ENCODE measurements at regions of chr16 and their contacts with region 1.

Region 1: DNA sequence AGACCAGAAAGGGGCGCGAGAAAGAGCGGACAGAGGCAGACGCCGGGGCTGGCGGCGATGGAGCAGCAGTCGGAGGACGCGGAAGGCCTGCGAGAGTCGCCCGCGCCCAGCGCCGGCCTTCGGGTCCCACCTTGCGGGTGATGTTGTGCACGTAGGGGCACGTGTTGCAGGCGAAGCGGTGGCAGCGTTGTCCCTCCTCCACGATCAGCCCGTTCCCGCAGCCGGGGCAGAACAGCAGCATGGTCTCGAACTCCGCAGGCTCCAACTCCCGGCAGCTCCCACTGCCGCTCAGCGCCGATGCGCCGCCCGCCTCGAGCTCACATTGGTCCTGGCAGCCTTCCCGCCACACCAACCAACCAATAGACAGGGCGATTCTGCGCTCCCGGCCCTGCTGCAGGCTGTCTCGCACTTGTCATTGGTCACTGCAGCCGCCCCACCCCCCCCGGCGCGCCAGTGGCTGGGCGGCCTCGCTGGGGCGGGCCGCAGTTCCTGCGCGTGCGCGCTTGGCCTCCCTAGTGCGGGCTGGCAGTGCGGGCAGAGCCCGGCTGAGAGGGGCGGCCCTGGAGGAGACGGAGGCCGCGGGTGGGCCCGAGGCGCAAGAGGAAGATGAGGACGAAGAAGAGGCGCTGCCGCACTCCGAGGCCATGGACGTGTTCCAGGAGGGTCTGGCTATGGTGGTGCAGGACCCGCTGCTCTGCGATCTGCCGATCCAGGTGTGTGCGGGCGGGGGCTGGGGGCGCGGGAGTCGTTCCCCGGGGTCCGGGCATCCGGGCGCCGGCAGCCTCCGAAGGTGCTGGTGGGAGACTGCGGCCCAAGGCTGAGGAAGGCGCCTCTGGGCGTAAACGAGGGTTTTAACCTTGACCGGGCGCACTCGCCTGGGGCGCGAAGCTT is at the starts of genes POLR3K and SNRNP25:
- DNase-seq: peak; percentile 96 to 99 (median 98)
- ATAC-seq: peak; percentile 97
- H3K4me3 ChIP-seq: peak within 1 kb of the TSS; percentile 91 to 98
- H3K4me3 Mint-ChIP-seq: peak within 1 kb of the TSS; percentile 97
- H3K27ac ChIP-seq: peak within 1 kb of the TSS; percentile 60
- H3K27ac Mint-ChIP-seq: peak within 1 kb of the TSS; percentile 85
- H3K4me1 ChIP-seq: peaks cover 21% of the 10 kb centered on the region
- H3K4me1 Mint-ChIP-seq: peaks cover 28% of the 10 kb centered on the region
- H3K27me3 ChIP-seq: no peaks in the 10 kb centered on the region
- H3K27me3 Mint-ChIP-seq: no peaks in the 10 kb centered on the region
- CTCF ChIP-seq: no peak
- total RNA-seq, gene POLR3K: 4.6 to 5.5 TPM
- total RNA-seq, gene SNRNP25: 4.9 to 5.4 TPM

Region 2: GRCh38 chr16:77807-78443 is 24.3 kb after region 1 on chr16 and contains the start of gene MPG:
- CTCF ChIA-PET with region 1: no interaction called
- POLR2A ChIA-PET with region 1: interaction called, 4 read pairs
- intact Hi-C with region 1: loop called (anchors 1 kb)
- DNase-seq: peak; percentile 55 to 90 (median 80)
- ATAC-seq: peak; percentile 91
- H3K4me3 ChIP-seq: peak within 1 kb of the TSS; percentile 68 to 69
- H3K4me3 Mint-ChIP-seq: peak within 1 kb of the TSS; percentile 87
- H3K27ac ChIP-seq: peak within 1 kb of the TSS; percentile 31 to 55
- H3K27ac Mint-ChIP-seq: peak within 1 kb of the TSS; percentile 73
- H3K4me1 ChIP-seq: peaks cover 26% of the 10 kb centered on the region
- H3K4me1 Mint-ChIP-seq: peaks cover 31% of the 10 kb centered on the region
- H3K27me3 ChIP-seq: peaks cover 5 to 7% of the 10 kb centered on the region in 2 experiments
- H3K27me3 Mint-ChIP-seq: peaks cover 11% of the 10 kb centered on the region
- CTCF ChIP-seq: no peak
- total RNA-seq, gene MPG: 12.3 to 13.0 TPM

Region 3: DNA sequence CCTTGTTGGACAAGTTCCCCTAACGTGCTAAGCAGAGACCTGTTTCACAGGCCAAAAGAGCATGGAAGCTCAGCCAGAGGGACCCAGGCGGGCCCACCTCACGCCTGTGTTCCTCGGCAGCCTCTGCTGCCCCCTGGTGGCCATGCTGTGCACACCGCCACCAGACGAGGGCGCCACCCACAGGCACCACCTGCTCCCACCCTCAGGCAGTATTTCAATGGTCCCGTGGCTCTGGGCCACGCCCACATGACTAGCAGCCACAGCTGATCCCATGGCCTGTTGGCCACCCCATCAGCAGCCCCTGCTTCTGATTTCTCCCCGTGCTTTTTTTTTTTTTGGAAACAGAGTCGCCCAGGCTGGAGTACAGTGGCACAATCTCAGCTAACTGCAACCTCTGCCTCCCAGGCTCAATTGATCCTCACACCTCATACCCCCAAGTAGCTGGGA is 43.4 kb after region 1 on chr16:
- CTCF ChIA-PET with region 1: interaction called, 10 read pairs
- POLR2A ChIA-PET with region 1: no interaction called
- intact Hi-C with region 1: no loop called
- DNase-seq: peak; percentile 82 to 94 (median 90)
- ATAC-seq: peak; percentile 100
- H3K4me3 ChIP-seq: no peak overlapping the region
- H3K4me3 Mint-ChIP-seq: no peak overlapping the region
- H3K27ac ChIP-seq: no peak overlapping the region
- H3K27ac Mint-ChIP-seq: no peak overlapping the region
- H3K4me1 ChIP-seq: no peaks in the 10 kb centered on the region
- H3K4me1 Mint-ChIP-seq: peaks cover 5% of the 10 kb centered on the region
- H3K27me3 ChIP-seq: no peaks in the 10 kb centered on the region
- H3K27me3 Mint-ChIP-seq: no peaks in the 10 kb centered on the region
- CTCF ChIP-seq: peak; percentile 97

Region 4: DNA sequence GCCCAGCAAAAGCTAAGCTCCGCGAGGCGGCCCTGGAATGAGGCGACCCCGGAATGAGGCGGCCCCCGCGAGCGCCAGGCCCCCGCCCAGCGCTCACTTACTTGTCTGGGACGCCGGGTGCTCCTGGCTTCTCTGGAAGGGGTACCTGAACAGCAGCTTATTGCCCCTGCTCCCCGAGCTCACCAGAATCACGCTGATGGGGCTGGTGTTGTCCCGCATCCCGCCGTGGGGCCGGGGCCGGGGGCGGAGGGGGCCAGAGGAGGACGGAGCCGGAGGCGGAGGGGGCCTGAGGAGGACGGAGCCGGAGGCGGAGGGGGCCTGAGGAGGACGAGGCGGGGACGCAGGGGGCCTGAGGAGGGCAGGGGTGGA is 84.4 kb after region 1 on chr16:
- CTCF ChIA-PET with region 1: no interaction called
- POLR2A ChIA-PET with region 1: no interaction called
- intact Hi-C with region 1: loop called in 1 of 2 experiments (anchors 1 kb)
- DNase-seq: peak in 6 of 9 experiments; percentile 8 to 61 (median 36)
- ATAC-seq: peak; percentile 25
- H3K4me3 ChIP-seq: peak overlapping the region; percentile 58 to 75
- H3K4me3 Mint-ChIP-seq: peak overlapping the region; percentile 85
- H3K27ac ChIP-seq: peak overlapping the region; percentile 33 to 40
- H3K27ac Mint-ChIP-seq: peak overlapping the region; percentile 66
- H3K4me1 ChIP-seq: peaks cover 7% of the 10 kb centered on the region
- H3K4me1 Mint-ChIP-seq: peaks cover 34% of the 10 kb centered on the region
- H3K27me3 ChIP-seq: no peaks in the 10 kb centered on the region
- H3K27me3 Mint-ChIP-seq: no peaks in the 10 kb centered on the region
- CTCF ChIP-seq: no peak

Region 5: DNA sequence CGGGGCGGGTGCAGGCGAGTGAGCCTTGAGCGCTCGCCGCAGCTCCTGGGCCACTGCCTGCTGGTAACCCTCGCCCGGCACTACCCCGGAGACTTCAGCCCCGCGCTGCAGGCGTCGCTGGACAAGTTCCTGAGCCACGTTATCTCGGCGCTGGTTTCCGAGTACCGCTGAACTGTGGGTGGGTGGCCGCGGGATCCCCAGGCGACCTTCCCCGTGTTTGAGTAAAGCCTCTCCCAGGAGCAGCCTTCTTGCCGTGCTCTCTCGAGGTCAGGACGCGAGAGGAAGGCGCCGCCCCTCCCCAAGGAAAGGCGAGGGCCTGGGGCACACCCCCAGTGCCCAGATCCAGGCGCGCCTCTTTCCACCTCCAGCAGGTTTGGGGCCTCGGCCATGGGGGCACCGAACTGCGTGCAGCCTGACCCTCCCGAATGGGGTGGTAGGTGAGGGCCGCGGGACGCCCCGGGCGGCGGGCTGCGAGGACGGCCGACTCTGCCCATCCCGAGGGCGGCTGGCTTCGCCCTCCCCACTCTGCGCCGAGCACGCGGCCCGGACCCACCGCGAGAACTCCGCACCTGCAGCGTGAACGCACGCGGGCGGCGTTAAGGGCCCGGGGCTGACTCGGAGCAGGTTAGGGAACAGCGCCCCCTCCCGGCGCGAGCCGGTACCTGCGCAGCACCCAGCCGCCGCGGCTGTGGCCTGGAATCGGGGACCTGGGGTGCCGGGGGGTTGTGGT is 127.5 kb after region 1 on chr16:
- CTCF ChIA-PET with region 1: no interaction called
- POLR2A ChIA-PET with region 1: no interaction called
- intact Hi-C with region 1: no loop called
- DNase-seq: peak; percentile 74 to 93 (median 85)
- ATAC-seq: peak; percentile 89
- H3K4me3 ChIP-seq: peak overlapping the region; percentile 42 to 59
- H3K4me3 Mint-ChIP-seq: peak overlapping the region; percentile 63
- H3K27ac ChIP-seq: no peak overlapping the region
- H3K27ac Mint-ChIP-seq: no peak overlapping the region
- H3K4me1 ChIP-seq: peaks cover 20% of the 10 kb centered on the region
- H3K4me1 Mint-ChIP-seq: peaks cover 8% of the 10 kb centered on the region
- H3K27me3 ChIP-seq: peaks cover 14 to 16% of the 10 kb centered on the region in 2 experiments
- H3K27me3 Mint-ChIP-seq: peaks cover 16% of the 10 kb centered on the region
- CTCF ChIP-seq: peak; percentile 96